Posterior vena cava (tissue), 2 donors: ENCODE measurements at regions of chr14 and their contacts with region 1.

Region 1: GRCh38 chr14:86086962-86087361 is 557.0 kb downstream of the FLRT2 start:
- DNase-seq: no peak

Region 2: DNA sequence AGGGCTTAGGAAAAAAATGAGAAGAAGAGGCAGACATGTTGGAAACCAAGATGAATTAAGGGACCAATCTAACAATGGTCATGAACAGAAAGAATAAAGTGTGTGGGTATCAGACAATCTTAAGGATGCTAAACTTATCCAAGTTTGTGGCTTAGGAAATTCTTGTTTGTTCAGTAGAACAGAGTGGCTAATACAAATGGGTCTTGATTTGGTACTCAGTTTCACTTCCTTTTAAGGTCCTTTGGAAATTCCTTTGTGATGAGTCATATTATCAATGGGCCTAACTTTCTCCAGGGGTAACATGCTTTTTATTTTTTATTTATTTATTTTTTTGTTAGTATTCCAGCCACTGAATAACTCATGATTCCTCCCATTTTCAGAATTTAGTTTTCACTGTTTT is 1711.7 kb before region 1 on chr14:
- intact Hi-C with region 1: loop called in 1 of 2 experiments (anchors 5 kb)
- DNase-seq: no peak

Region 3: DNA sequence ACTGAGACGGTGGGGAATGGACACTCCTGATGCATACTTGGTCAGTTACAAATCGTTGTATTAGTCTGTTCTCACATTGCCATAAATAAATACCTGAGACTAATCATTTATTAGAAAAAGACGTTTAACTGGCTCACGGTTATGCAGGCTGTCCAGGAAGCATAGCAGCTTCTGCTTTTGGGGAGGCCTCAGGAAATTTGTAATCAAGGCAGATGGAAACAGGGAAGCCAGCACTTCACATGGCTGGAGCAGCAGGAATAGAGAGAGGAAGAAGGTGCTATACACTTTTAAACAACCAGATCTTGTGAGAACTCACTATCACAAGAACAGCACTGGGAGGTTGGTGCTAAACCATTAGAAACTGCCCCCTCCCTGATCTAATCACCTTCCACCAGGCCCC is 138.8 kb before region 1 on chr14:
- intact Hi-C with region 1: no loop called
- DNase-seq: no peak